A673 (cell line): ENCODE measurements at regions of chr5 and their contacts with region 1.

Region 1: DNA sequence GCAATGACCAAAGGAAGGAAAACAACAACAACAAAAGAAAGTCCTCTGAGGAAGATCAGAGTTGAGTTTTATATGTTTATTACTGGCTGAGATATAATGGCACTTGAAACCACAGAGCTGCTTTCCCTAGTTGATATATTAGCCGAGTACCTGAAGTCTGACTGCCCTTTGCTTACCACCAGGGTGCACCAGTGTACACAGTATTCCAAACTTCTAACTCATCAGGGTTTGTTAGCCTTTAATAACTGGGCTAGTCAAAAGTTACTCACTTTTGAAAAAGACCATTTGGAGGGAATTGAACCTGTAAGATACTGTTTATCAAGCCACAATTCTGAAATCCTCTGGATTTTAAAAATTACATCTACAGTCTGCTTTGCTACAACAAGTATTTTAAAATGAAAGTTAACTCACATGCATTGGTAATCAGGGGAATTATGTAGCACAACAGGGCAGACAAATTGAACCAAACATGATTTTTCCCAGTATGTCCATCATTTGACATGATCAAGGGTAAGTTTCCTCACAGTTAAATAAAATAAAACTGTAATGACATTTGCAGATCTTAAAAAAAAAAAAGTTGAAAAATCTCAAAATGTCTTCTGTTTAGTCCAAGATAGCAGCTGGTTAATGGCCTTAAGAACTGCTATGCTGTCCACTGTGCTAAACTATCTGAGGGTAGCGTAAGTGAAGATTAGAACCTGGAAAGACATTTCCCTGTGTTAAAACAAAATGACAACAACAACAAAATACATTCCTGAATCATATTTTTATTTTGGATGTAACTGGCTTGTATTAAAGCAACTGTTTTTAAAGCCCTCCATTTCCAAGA is 57.3 kb upstream of the C6 start:
- DNase-seq: peak; percentile 82
- H3K4me3 ChIP-seq: no peak overlapping the region
- H3K27ac ChIP-seq: peak overlapping the region; percentile 7
- H3K4me1 ChIP-seq: peaks cover 19% of the 10 kb centered on the region
- H3K27me3 ChIP-seq: no peaks in the 10 kb centered on the region
- CTCF ChIP-seq: peak; percentile 89

Region 2: GRCh38 chr5:41312478-41313060 is 41.9 kb after region 1 on chr5:
- CTCF ChIA-PET with region 1: no interaction called
- POLR2A ChIA-PET with region 1: no interaction called
- intact Hi-C with region 1: loop called (anchors 2 kb)
- DNase-seq: peak; percentile 87
- H3K4me3 ChIP-seq: no peak overlapping the region
- H3K27ac ChIP-seq: peak overlapping the region; percentile 93
- H3K4me1 ChIP-seq: peaks cover 45% of the 10 kb centered on the region
- H3K27me3 ChIP-seq: no peaks in the 10 kb centered on the region
- CTCF ChIP-seq: no peak

Region 3: GRCh38 chr5:41334758-41335157 is 64.1 kb after region 1 on chr5:
- CTCF ChIA-PET with region 1: no interaction called
- POLR2A ChIA-PET with region 1: no interaction called
- intact Hi-C with region 1: loop called (anchors 5 kb)
- DNase-seq: peak; percentile 79
- H3K4me3 ChIP-seq: no peak overlapping the region
- H3K27ac ChIP-seq: peak overlapping the region; percentile 34
- H3K4me1 ChIP-seq: peaks cover 32% of the 10 kb centered on the region
- H3K27me3 ChIP-seq: no peaks in the 10 kb centered on the region
- CTCF ChIP-seq: no peak

Region 4: DNA sequence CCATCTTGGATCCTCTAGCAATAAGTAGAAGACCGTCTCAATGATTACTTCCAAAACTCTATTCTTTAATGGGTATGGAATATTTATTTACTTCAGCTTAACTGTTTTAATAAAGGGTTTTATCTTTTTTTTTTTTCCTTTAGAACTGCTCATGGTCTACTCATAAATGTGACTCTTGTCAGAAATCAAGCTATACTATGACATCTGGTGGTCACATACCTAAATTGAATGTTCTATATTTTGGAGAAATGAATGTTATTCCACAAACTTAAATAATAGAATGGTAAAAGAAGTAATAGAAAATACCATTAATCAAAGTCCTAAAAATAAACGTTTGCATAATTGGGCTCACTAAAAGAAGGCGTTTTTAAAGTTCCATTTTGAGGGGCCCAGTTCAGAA is 371.0 kb after region 1 on chr5:
- CTCF ChIA-PET with region 1: interaction called, 5 read pairs
- POLR2A ChIA-PET with region 1: no interaction called
- intact Hi-C with region 1: loop called (anchors 2 kb)
- DNase-seq: peak; percentile 27
- H3K4me3 ChIP-seq: no peak overlapping the region
- H3K27ac ChIP-seq: no peak overlapping the region
- H3K4me1 ChIP-seq: no peaks in the 10 kb centered on the region
- H3K27me3 ChIP-seq: no peaks in the 10 kb centered on the region
- CTCF ChIP-seq: peak; percentile 45; the same call in 1 of the 2 replicates

Region 5: DNA sequence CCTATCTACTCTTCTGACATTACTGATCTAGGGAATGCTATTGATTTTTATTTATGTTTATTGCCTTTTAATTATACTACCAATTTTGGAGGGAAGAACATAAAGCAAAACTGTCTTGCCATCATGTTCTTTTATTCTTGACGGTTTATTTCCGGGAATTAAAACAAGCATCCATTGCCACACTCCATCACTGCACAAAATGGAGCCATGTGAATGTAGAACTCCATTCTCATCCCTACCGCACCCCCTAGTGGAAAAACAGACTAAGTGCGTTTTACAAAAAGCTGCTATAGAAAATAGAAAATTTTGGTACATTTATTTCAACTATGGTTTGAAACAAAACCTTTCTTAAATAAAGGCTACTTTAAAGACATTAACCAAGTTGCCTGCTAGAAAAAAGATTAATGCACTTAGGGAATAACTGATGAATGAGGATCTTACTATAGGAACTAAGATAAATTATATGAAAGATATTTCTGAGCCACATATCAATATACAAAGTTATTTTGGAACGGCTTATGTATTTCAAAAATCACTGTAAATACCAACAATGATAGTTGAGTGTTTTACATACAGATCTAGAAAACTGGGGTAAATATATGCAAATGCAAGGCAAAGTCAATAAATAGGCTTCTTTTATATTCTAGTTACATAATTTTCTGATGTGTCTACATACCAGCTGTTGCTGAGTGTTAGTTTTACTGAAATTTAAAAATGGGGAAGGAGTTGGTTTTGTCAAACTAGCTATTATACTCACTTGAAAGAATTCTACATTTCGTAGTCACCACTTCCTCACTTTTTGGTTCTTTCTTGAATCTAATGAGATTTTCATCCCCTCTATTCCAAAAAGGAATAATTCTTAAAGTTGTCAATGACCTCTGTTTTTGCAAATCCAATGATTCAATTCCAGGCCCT is 573.1 kb after region 1 on chr5:
- CTCF ChIA-PET with region 1: no interaction called
- POLR2A ChIA-PET with region 1: no interaction called
- intact Hi-C with region 1: loop called (anchors 5 kb)
- DNase-seq: peak; percentile 80
- H3K4me3 ChIP-seq: no peak overlapping the region
- H3K27ac ChIP-seq: no peak overlapping the region
- H3K4me1 ChIP-seq: no peaks in the 10 kb centered on the region
- H3K27me3 ChIP-seq: no peaks in the 10 kb centered on the region
- CTCF ChIP-seq: peak; percentile 87